ENCODE measurements at regions of chr22 and their contacts with region 1.

Region 1: DNA sequence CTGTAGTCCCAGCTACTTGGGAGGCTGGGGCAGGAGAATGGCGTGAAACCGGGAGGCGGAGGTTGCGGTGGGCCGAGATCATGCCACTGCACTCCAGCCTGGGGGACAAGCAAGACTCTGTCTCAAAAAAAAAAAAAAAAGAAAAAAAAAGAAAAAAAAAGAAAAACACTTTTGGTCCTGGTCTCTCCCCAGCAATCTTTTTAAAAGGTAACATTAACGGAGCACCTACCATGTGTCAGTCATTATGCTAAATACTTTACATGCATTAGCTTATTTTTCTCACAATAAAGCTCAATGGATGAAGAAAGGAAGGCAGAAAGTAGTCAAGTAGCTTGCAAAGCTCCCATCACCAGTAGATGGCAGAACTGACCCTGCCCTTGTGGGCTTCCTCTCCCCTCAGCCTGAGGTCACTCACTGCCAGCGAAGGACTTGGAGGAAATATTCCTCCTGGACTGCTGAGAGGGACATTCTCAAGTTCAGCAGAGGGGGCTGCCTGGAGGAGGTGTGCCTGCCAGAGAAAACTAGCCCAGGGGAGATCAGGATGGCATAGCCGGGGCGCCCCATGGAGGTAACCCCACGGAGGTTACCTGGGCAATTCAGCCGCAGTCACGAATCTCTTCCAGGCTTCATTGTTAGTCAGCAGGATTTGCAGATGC is 15.5 kb downstream of the APOL3 start:
- DNase-seq: peak in 1 of 2 donors; percentile 83
- H3K4me3 ChIP-seq: no peak overlapping the region
- H3K27ac ChIP-seq: no peak overlapping the region
- H3K4me1 ChIP-seq: no peaks in the 10 kb centered on the region
- H3K27me3 ChIP-seq: no peaks in the 10 kb centered on the region
- CTCF ChIP-seq: peak; percentile 78 to 85 (median 83)

Region 2: GRCh38 chr22:36180038-36180880 is 35.2 kb after region 1 on chr22:
- intact Hi-C with region 1: loop called (anchors 1 kb)
- DNase-seq: peak; percentile 53 to 93
- H3K4me3 ChIP-seq: no peak overlapping the region
- H3K27ac ChIP-seq: no peak overlapping the region
- H3K4me1 ChIP-seq: peaks cover 0 to 4% of the 10 kb centered on the region in 2 donors
- H3K27me3 ChIP-seq: no peaks in the 10 kb centered on the region
- CTCF ChIP-seq: peak; percentile 78 to 90 (median 84)

Region 3: DNA sequence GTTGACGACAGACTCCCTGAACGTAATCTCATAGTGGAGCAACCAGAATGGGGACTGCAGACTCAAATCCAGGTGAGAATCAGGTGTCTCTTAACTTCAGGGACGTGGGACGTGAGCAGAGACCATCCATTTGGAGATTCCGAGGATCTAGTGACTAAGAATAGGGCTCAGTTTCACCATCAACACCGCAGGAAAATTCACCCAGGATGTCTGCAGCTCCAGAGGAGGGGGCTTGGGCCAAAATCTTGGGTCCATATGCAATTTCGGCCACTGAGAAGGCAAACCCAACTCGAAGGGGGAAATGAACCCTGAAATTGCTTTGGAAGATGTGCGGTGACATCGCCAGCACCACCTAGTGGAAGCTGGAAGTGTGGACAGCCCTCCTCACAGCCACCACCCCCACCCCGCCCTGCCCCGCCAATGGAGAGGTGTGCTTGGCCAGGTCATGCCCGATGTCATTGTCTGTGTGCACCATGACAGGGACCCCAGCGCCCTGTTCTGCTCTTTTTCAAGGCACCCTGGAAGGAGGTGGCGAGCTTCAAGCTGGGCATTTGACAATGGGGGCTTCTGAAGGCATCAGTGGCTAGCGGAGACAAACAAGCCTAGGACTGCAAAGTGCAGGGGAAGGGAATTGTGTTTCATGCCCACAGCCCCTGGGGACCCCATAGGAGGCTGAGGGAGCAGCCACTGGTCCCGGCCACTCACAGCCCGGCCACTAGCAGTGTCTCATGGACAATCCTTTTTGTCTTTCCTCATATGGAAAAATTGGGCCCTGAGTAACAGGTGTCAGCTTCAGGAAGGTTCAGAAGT is 132.7 kb after region 1 on chr22:
- intact Hi-C with region 1: loop called (anchors 5 kb)
- DNase-seq: no peak
- H3K4me3 ChIP-seq: no peak overlapping the region
- H3K27ac ChIP-seq: no peak overlapping the region
- H3K4me1 ChIP-seq: peaks cover 0 to 5% of the 10 kb centered on the region in 2 donors
- H3K27me3 ChIP-seq: no peaks in the 10 kb centered on the region
- CTCF ChIP-seq: peak; percentile 63 to 80 (median 79)

Measured in ascending aorta (tissue), 2 donors.